ENCODE measurements at regions of chr2 and their contacts with region 1.

Region 1: GRCh38 chr2:9813312-9814133 is 29.8 kb upstream of the TAF1B start:
- DNase-seq: no peak
- H3K4me3 ChIP-seq: no peak overlapping the region
- CTCF ChIP-seq: peak; percentile 97

Region 2: GRCh38 chr2:9770308-9771100 is 43.0 kb before region 1 on chr2:
- CTCF ChIA-PET with region 1: interaction called, 20 read pairs
- POLR2A ChIA-PET with region 1: no interaction called
- DNase-seq: peak; percentile 10
- H3K4me3 ChIP-seq: no peak overlapping the region
- CTCF ChIP-seq: peak; percentile 76

Region 3: GRCh38 chr2:9843229-9844035 is 29.9 kb after region 1 on chr2 and contains the start of gene TAF1B:
- CTCF ChIA-PET with region 1: interaction called, 83 read pairs
- POLR2A ChIA-PET with region 1: interaction called, 5 read pairs
- DNase-seq: no peak
- H3K4me3 ChIP-seq: peak within 1 kb of the TSS; percentile 81
- CTCF ChIP-seq: peak; percentile 15

Region 4: GRCh38 chr2:9975805-9976447 is 162.4 kb after region 1 on chr2:
- CTCF ChIA-PET with region 1: interaction called, 61 read pairs
- POLR2A ChIA-PET with region 1: no interaction called
- DNase-seq: peak; percentile 78
- H3K4me3 ChIP-seq: no peak overlapping the region
- CTCF ChIP-seq: no peak

Region 5: GRCh38 chr2:10028988-10029874 is 215.7 kb after region 1 on chr2:
- CTCF ChIA-PET with region 1: interaction called, 38 read pairs
- POLR2A ChIA-PET with region 1: no interaction called
- DNase-seq: no peak
- H3K4me3 ChIP-seq: no peak overlapping the region
- CTCF ChIP-seq: no peak

Region 6: GRCh38 chr2:10064932-10065772 is 251.6 kb after region 1 on chr2:
- CTCF ChIA-PET with region 1: interaction called, 28 read pairs
- POLR2A ChIA-PET with region 1: no interaction called
- DNase-seq: no peak
- H3K4me3 ChIP-seq: no peak overlapping the region
- CTCF ChIP-seq: no peak

Region 7: DNA sequence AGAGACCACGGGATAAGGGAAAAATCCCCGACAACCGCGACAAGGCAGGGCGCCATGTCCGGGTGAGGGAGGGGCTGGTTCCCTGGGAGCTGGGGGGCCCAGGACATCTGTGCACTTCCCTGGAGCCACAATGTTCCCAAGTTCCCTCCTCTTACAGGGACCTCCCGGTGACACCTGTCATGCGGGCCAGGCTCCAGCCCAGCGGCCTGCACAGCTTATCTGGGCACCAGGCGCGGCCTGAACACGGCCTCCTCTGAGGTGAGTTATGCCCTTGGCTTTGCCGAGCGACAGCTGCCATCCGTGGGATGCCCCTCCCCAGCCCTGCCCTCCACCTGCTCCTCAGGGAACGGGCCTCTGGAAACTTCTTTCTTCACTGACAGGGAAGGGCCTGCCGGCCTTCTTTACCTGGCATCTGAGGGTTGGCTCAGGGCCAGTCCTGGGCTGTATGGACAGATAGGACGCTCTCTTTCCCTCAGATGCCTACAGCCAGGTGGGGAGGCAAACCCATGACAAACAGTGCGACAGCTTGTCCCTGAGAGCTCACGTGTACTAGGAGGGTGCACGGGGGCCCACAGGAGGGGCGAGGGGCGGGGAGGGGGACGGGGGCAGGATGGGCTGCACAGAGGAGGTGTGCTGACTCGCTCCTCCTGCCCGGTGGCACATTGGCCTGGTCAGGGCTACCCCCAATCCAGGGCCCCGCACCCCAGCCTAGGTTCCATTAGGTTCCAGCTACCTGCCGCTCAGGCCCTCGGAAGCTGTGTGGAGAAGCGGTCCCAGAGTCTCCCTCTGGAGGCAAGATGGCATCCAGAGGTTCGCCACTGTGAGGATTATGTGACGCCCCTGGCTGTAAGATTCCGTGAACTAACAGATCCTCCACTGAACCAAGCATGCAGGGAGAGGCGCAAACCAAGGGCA is 454.3 kb after region 1 on chr2:
- CTCF ChIA-PET with region 1: no interaction called
- POLR2A ChIA-PET with region 1: no interaction called
- DNase-seq: no peak
- H3K4me3 ChIP-seq: no peak overlapping the region
- CTCF ChIP-seq: no peak

Region 8: GRCh38 chr2:10400568-10400977 is 587.0 kb after region 1 on chr2:
- CTCF ChIA-PET with region 1: no interaction called
- POLR2A ChIA-PET with region 1: no interaction called
- DNase-seq: no peak
- H3K4me3 ChIP-seq: no peak overlapping the region
- CTCF ChIP-seq: no peak